ENCODE measurements at regions of chr17 and their contacts with region 1.

Region 1: GRCh38 chr17:34199932-34200534 is 55.1 kb upstream of the CCL2 start:
- DNase-seq: peak; percentile 90
- H3K4me3 ChIP-seq: no peak overlapping the region
- H3K27ac ChIP-seq: no peak overlapping the region
- H3K4me1 ChIP-seq: peaks cover 3% of the 10 kb centered on the region
- H3K27me3 ChIP-seq: peaks cover 13 to 34% of the 10 kb centered on the region in 2 experiments
- CTCF ChIP-seq: peak; percentile 100
- POLR2A ChIP-seq: no peak

Region 2: DNA sequence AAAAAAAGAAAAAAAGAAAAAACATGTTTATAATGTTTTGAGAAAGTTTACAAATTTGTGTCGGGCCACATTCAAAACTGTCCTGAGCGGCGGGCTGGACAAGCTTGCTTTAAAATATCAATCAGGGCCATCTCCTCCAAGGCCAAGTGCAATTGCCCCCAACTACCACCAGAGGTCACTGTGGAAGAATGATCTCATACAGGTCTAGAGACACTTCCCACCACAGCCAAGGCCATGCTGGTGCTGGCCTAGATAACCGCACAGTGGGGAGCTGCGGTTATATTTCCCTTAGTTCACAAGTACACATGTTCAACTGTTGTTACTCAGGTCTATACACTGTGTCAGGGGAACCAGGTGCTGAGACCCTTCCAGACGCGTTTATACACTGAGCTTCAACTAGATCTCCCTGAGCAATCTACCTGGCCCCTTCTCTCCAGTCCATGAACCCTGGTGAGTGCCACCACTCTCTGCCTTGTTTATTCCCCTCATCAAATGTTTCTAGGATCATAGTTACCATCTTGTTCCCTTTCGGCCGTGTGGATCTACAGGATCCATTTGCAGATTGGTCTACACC is 28.7 kb before region 1 on chr17:
- CTCF ChIA-PET with region 1: interaction called, 36 read pairs
- POLR2A ChIA-PET with region 1: no interaction called
- dilution Hi-C with region 1: no loop called
- intact Hi-C with region 1: loop called (anchors 1 kb)
- DNase-seq: peak; percentile 73
- H3K4me3 ChIP-seq: no peak overlapping the region
- H3K27ac ChIP-seq: no peak overlapping the region
- H3K4me1 ChIP-seq: no peaks in the 10 kb centered on the region
- H3K27me3 ChIP-seq: peaks cover 12 to 19% of the 10 kb centered on the region in 2 experiments
- CTCF ChIP-seq: peak; percentile 87 to 91
- POLR2A ChIP-seq: no peak

Region 3: GRCh38 chr17:34220754-34221395 is 20.8 kb after region 1 on chr17:
- CTCF ChIA-PET with region 1: interaction called, 19 read pairs
- POLR2A ChIA-PET with region 1: no interaction called
- dilution Hi-C with region 1: no loop called
- intact Hi-C with region 1: no loop called
- DNase-seq: no peak
- H3K4me3 ChIP-seq: no peak overlapping the region
- H3K27ac ChIP-seq: no peak overlapping the region
- H3K4me1 ChIP-seq: peaks cover 4% of the 10 kb centered on the region
- H3K27me3 ChIP-seq: peaks cover 12% of the 10 kb centered on the region in 2 experiments
- CTCF ChIP-seq: no peak
- POLR2A ChIP-seq: no peak

Region 4: GRCh38 chr17:34241062-34241461 is 41.0 kb after region 1 on chr17:
- CTCF ChIA-PET with region 1: interaction called, 31 read pairs
- POLR2A ChIA-PET with region 1: no interaction called
- dilution Hi-C with region 1: no loop called
- intact Hi-C with region 1: loop called (anchors 1 kb)
- DNase-seq: peak; percentile 79
- H3K4me3 ChIP-seq: no peak overlapping the region
- H3K27ac ChIP-seq: peak overlapping the region; percentile 97
- H3K4me1 ChIP-seq: peaks cover 74% of the 10 kb centered on the region
- H3K27me3 ChIP-seq: no peaks in the 10 kb centered on the region
- CTCF ChIP-seq: no peak
- POLR2A ChIP-seq: no peak

Region 5: GRCh38 chr17:34254651-34255380 is 54.8 kb after region 1 on chr17 and contains the start of gene CCL2:
- CTCF ChIA-PET with region 1: interaction called, 19 read pairs
- POLR2A ChIA-PET with region 1: no interaction called
- dilution Hi-C with region 1: no loop called
- intact Hi-C with region 1: loop called (anchors 1 kb)
- DNase-seq: peak; percentile 92
- H3K4me3 ChIP-seq: peak within 1 kb of the TSS in 2 of 3 experiments; percentile 43 to 46
- H3K27ac ChIP-seq: peak within 1 kb of the TSS; percentile 96
- H3K4me1 ChIP-seq: peaks cover 78% of the 10 kb centered on the region
- H3K27me3 ChIP-seq: no peaks in the 10 kb centered on the region
- CTCF ChIP-seq: no peak
- POLR2A ChIP-seq: no peak
- total RNA-seq, gene CCL2: 160 and 238 TPM in 2 replicates

Region 6: DNA sequence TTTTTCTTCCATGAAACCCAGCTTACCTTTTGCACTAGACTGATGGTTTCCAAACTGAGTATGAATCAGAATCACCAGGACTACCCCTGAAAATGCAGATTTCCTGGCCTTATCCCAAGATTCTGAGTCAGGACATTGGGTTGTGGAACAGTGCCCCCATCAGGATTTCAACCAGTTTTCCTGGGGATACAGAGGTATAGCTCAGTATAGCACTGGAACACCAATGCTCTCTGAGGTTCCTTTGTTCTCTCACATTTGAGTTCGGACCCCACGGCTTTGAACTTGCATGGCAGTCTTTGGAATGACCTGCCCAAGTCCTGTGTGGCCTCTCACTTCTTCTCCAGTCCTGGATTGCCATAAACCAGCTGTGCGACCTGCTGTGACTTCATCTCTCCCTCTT is 106.4 kb after region 1 on chr17:
- CTCF ChIA-PET with region 1: interaction called, 202 read pairs
- POLR2A ChIA-PET with region 1: interaction called, 3 read pairs
- dilution Hi-C with region 1: loop called (anchors 25 kb)
- intact Hi-C with region 1: loop called (anchors 1 kb)
- DNase-seq: peak; percentile 75
- H3K4me3 ChIP-seq: no peak overlapping the region
- H3K27ac ChIP-seq: no peak overlapping the region
- H3K4me1 ChIP-seq: no peaks in the 10 kb centered on the region
- H3K27me3 ChIP-seq: peaks cover 15% of the 10 kb centered on the region in 2 experiments
- CTCF ChIP-seq: peak; percentile 46 to 57
- POLR2A ChIP-seq: no peak